Activated CD4-positive, alpha-beta T cell treated with anti-CD3 and anti-CD28 coated beads for 36 hours (primary cell): ENCODE measurements at regions of chr1 and their contacts with region 1.

Region 1: DNA sequence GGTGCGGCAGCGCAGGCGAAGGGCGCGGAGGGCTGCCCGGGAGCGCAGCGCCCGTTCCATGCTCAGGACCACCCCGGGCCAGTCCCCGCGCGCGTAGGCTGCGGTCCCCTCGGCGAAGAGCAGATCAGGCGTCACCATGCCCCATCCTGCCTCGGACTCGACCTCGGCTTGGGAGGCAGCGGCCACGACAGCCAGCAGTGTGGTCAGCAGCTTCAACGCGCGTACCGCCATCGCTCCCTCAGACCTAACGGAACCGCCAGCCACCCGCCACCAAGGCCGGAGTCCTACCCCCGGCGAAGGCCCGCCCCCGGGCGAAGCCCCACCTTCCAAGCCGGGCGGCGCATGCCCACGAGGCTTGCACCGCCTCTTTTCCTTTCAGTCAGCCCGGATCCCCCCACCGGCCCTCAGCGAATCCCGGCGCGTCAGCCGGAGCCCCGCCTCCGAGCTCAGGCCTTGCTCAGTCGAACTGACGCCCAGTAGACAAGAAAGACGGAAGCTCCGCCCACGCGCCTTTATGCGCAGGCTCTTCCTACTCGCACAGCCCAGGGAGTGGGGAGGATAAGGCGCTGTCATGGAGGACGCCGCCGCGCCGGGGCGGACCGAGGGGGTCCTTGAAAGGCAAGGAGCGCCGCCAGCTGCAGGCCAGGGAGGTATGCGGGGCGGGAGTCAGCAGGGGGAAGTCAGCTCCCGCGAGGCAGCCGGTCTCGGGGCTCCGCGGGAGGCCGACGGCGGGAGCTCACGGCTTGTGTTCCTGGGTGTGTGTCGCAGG is at the starts of genes C1orf50 and P3H1:
- DNase-seq: peak; percentile 100
- ATAC-seq: peak; percentile 96
- H3K4me3 Mint-ChIP-seq: no peak within 1 kb of the TSS
- H3K27ac Mint-ChIP-seq: peak within 1 kb of the TSS; percentile 85
- H3K4me1 Mint-ChIP-seq: peaks cover 36% of the 10 kb centered on the region
- H3K27me3 Mint-ChIP-seq: no peaks in the 10 kb centered on the region
- total RNA-seq, gene C1orf50: 4.0 to 8.0 TPM
- total RNA-seq, gene P3H1: 24.3 to 28.8 TPM

Region 2: GRCh38 chr1:41360993-41361753 is 1405.8 kb before region 1 on chr1 and contains the start of gene FOXO6:
- CTCF ChIA-PET with region 1: no interaction called
- POLR2A ChIA-PET with region 1: no interaction called
- intact Hi-C with region 1: loop called in 1 of 2 experiments (anchors 5 kb)
- DNase-seq: peak; percentile 96
- ATAC-seq: peak; percentile 96
- H3K4me3 Mint-ChIP-seq: peak within 1 kb of the TSS; percentile 49
- H3K27ac Mint-ChIP-seq: no peak within 1 kb of the TSS
- H3K4me1 Mint-ChIP-seq: peaks cover 10% of the 10 kb centered on the region
- H3K27me3 Mint-ChIP-seq: peaks cover 24% of the 10 kb centered on the region
- total RNA-seq, gene FOXO6: 0.09 TPM in 1 of 2 experiments, not detected in the other

Region 3: DNA sequence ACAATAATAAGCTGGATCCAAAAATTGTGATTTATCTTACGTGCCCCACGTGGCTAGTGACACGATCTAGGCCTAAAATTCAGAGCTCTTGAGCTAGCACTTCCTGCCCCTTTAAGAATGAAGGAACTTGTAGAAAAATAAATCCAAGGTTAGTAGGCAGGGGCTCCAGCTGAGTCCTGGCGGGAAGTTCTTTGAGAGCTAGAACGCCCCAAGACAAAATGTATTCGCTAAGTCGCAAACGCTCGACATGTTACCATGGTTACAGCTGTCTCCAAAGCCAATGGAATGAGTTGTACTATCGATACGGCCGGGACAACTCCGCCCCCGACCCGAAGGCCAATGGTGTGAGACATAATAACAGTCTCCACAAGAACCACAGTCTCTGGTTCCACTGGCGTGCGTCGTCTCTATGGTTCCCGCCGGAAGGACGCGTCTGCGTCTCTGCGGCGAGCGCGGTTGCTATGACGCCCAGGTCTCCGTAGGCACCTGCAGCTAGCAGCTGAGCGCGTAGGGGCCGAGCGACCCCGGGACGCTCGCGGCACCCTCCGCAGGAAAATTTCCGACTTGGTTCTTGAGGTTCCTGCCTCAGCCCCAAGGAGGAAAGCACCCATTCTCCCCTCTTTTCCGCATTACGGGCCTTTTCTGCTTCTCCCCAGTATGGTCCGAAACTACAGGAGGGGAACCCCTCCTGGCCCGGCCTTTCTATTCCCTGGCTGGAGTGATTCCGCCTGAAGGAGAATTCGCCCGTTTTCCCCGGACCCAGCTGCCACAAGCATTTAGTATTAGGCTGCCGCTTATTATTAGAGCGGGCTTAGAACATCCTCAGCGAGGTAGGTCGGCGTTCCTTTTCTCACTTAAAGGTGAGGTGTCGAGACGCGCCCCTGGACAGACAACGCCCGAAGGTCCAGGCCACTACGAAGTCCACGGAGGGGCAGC is 303.8 kb before region 1 on chr1 and contains the start of gene CCDC30:
- CTCF ChIA-PET with region 1: no interaction called
- POLR2A ChIA-PET with region 1: no interaction called
- intact Hi-C with region 1: loop called in 1 of 2 experiments (anchors 1 kb)
- DNase-seq: peak; percentile 97
- ATAC-seq: peak; percentile 100
- H3K4me3 Mint-ChIP-seq: peak within 1 kb of the TSS; percentile 77
- H3K27ac Mint-ChIP-seq: peak within 1 kb of the TSS; percentile 73
- H3K4me1 Mint-ChIP-seq: peaks cover 31% of the 10 kb centered on the region
- H3K27me3 Mint-ChIP-seq: no peaks in the 10 kb centered on the region
- total RNA-seq, gene CCDC30: 1.3 to 2.3 TPM

Region 4: GRCh38 chr1:42657971-42658879 is 108.7 kb before region 1 on chr1 and contains the start of gene PPIH:
- CTCF ChIA-PET with region 1: interaction called, 3 read pairs
- POLR2A ChIA-PET with region 1: interaction called, 4 read pairs
- intact Hi-C with region 1: loop called in 1 of 2 experiments (anchors 1 kb)
- DNase-seq: peak; percentile 98
- ATAC-seq: peak; percentile 97
- H3K4me3 Mint-ChIP-seq: peak within 1 kb of the TSS; percentile 97
- H3K27ac Mint-ChIP-seq: peak within 1 kb of the TSS; percentile 97
- H3K4me1 Mint-ChIP-seq: peaks cover 39% of the 10 kb centered on the region
- H3K27me3 Mint-ChIP-seq: no peaks in the 10 kb centered on the region
- total RNA-seq, gene PPIH: 111 to 114 TPM

Region 5: GRCh38 chr1:42681741-42682483 is 85.0 kb before region 1 on chr1 and contains the start of gene YBX1:
- CTCF ChIA-PET with region 1: interaction called, 3 read pairs
- POLR2A ChIA-PET with region 1: interaction called, 8 read pairs
- intact Hi-C with region 1: loop called (anchors 1 to 2 kb)
- DNase-seq: peak; percentile 96
- ATAC-seq: peak; percentile 97
- H3K4me3 Mint-ChIP-seq: peak within 1 kb of the TSS; percentile 93
- H3K27ac Mint-ChIP-seq: peak within 1 kb of the TSS; percentile 97
- H3K4me1 Mint-ChIP-seq: peaks cover 41% of the 10 kb centered on the region
- H3K27me3 Mint-ChIP-seq: no peaks in the 10 kb centered on the region
- total RNA-seq, gene YBX1: 1,224 to 1,435 TPM

Region 6: GRCh38 chr1:42777852-42778251 is 10.9 kb after region 1 on chr1:
- CTCF ChIA-PET with region 1: interaction called, 14 read pairs
- POLR2A ChIA-PET with region 1: interaction called, 3 read pairs
- intact Hi-C with region 1: no loop called
- DNase-seq: peak; percentile 55
- ATAC-seq: peak; percentile 79
- H3K4me3 Mint-ChIP-seq: no peak overlapping the region
- H3K27ac Mint-ChIP-seq: no peak overlapping the region
- H3K4me1 Mint-ChIP-seq: peaks cover 14% of the 10 kb centered on the region
- H3K27me3 Mint-ChIP-seq: no peaks in the 10 kb centered on the region

Region 7: DNA sequence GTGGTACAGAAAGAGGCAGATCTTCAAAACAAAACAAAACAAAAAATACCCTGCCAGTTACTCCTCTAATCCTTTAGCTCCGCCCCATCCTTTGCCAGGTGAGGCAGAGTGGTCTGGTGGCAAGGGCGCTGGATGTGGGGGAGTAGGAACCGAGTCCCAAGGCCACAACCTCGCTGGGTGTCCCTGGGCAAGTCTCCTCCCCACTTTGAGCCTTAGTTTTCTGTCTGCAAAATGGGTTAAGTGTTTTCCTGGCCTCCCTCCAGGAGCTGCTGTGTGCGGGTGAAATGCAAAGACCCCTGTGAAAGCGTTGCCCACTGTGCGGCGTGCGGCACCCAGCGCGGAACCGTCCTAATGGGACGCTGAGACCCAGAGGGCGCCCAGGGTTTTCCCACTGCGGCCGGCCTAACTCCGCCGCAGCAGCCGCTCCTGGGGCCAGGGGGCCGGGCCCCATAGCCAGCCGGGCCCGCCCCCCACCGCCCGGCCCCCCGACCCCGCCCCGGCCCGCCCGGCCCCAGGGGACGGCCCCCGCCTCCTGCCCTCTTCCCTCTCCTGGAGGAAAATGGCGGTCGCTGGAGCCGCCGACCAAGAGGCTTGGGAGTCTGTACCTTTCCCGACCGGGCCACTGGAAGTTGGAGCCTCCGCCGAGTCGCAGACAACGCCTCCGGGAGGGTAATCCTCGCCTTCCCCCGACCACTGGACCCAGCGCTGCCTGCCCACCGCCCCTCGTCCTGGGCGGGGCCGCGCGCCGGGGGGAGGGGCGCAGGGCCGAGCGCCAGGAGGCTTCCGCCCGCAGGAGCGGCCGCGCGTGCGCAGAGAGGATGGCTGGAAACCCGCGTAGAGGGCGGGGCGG is 49.9 kb after region 1 on chr1 and contains the starts of genes ERMAP and SVBP:
- CTCF ChIA-PET with region 1: interaction called, 20 read pairs
- POLR2A ChIA-PET with region 1: interaction called, 13 read pairs
- intact Hi-C with region 1: loop called (anchors 1 kb)
- DNase-seq: peak; percentile 98
- ATAC-seq: peak; percentile 90
- H3K4me3 Mint-ChIP-seq: peak within 1 kb of the TSS; percentile 77
- H3K27ac Mint-ChIP-seq: peak within 1 kb of the TSS; percentile 84
- H3K4me1 Mint-ChIP-seq: peaks cover 16% of the 10 kb centered on the region
- H3K27me3 Mint-ChIP-seq: peaks cover 2% of the 10 kb centered on the region
- total RNA-seq, gene ERMAP: 4.5 to 6.4 TPM
- total RNA-seq, gene SVBP: 14.5 to 14.6 TPM